ENCODE measurements at regions of chr9 and their contacts with region 1.

Region 1: GRCh38 chr9:130780865-130781504 is 54.1 kb upstream of the ABL1 start:
- DNase-seq: peak in 1 of 2 donors; percentile 86
- ATAC-seq: peak; percentile 75 to 94 (median 90)
- H3K4me3 ChIP-seq: peak overlapping the region in 7 of 10 donors; percentile 16 to 43 (median 29)
- H3K27ac ChIP-seq: peak overlapping the region; percentile 61 to 89 (median 84)
- H3K4me1 ChIP-seq: peaks cover 0 to 61% (median 48%) of the 10 kb centered on the region in 9 donors
- H3K27me3 ChIP-seq: no peaks in the 10 kb centered on the region
- CTCF ChIP-seq: no peak

Region 2: DNA sequence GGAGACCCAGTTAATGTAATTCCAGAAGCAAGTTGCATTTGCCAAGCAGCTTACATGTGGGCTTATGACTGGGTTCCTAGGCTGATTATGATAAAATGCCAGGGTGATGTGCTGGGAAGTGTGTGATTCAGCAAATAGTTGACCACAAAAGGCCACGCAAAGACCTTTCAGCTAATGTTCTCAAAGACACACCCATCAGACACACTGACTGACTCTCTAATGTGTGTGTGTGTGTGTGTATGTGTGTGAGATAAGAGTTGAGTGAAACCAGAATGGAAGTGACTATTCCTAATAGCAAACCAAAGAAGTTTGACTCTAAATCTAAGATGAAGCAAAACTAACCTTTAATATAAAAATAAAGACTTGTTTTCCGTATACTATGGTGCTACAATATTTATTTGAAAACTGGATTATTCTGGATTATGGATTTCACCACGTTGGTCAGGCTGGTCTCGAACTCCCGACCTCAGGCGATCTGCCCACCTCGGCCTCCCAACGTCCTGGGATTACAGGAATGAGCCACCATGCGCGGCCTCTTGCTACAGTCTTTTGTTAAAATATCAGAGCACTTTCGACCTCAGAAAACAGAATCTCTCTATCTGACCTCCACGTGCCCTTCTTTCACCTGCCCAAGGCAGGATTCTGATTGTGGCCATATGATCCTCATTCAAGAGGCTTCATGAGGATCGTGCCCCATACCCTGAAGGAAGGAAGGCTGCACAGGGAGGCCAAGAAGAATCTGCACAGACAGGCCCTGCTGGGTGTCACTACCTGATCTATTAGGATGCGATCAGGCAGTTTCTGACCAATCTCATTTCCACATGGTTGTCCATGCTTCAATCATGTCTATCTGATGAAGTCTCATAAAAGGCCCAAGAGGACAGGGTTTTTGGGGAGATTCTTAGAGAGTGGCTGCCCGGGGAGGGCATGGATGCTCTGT is 870.1 kb before region 1 on chr9:
- intact Hi-C with region 1: no loop called
- DNase-seq: no peak
- ATAC-seq: peak in 1 of 8 donors; percentile 68
- H3K4me3 ChIP-seq: no peak overlapping the region
- H3K27ac ChIP-seq: peak overlapping the region in 1 of 10 donors; percentile 4
- H3K4me1 ChIP-seq: peaks cover 0 to 13% (median 0%) of the 10 kb centered on the region in 9 donors
- H3K27me3 ChIP-seq: no peaks in the 10 kb centered on the region
- CTCF ChIP-seq: no peak

Region 3: GRCh38 chr9:130745210-130745800 is 35.7 kb before region 1 on chr9:
- intact Hi-C with region 1: loop called in 1 of 10 experiments (anchors 5 kb)
- DNase-seq: no peak
- ATAC-seq: no peak
- H3K4me3 ChIP-seq: no peak overlapping the region
- H3K27ac ChIP-seq: no peak overlapping the region
- H3K4me1 ChIP-seq: peaks cover 0 to 18% (median 0%) of the 10 kb centered on the region in 9 donors
- H3K27me3 ChIP-seq: no peaks in the 10 kb centered on the region
- CTCF ChIP-seq: no peak

Region 4: DNA sequence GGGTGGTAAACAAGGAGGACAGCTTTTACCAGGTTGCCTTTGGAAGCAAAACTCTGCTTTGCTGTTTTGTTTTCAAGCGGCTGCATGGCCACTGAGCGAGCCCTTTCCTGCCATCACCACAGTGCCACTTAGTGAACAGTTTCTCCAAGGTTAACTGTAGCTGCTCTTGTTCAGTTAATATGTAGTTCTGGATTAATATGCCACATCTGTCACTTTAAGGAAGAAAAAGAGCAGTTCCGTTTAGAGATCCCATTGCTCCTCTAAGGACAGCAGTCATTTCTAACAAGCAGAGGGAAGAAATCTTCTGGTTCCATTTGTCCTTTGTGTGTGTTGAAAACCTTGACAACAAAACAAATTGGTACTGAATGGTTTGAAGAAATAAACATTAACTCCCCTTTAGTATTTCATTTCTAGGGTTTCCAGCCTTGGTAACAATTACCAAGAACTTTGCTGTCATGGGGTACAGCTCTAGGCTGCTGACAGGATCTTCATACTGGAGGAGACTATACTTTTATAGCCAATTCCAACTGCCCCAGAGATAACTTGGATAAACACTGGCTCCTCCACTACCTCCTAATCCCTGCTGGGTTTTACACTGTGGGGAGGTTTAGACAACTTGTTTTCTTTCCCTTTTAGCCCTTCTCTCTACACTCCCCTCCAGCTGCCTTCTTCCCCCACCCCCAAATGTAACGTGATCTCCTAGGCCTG is 43.8 kb after region 1 on chr9:
- intact Hi-C with region 1: loop called in 2 of 10 experiments (anchors 5 kb)
- DNase-seq: peak in 1 of 2 donors; percentile 53
- ATAC-seq: peak; percentile 65 to 92 (median 90)
- H3K4me3 ChIP-seq: peak overlapping the region in 4 of 10 donors; percentile 4 to 19 (median 10)
- H3K27ac ChIP-seq: peak overlapping the region; percentile 1 to 84 (median 72)
- H3K4me1 ChIP-seq: peaks cover 14 to 43% (median 29%) of the 10 kb centered on the region in 9 donors
- H3K27me3 ChIP-seq: no peaks in the 10 kb centered on the region
- CTCF ChIP-seq: no peak

Region 5: GRCh38 chr9:130834371-130835311 is 53.7 kb after region 1 on chr9 and contains the start of gene ABL1:
- intact Hi-C with region 1: loop called in 6 of 10 experiments (anchors 5 to 10 kb)
- DNase-seq: peak; percentile 78 to 84
- ATAC-seq: peak; percentile 73 to 92 (median 86)
- H3K4me3 ChIP-seq: peak within 1 kb of the TSS; percentile 36 to 78 (median 68)
- H3K27ac ChIP-seq: peak within 1 kb of the TSS; percentile 92 to 96 (median 94)
- H3K4me1 ChIP-seq: peaks cover 10 to 75% (median 66%) of the 10 kb centered on the region in 9 donors
- H3K27me3 ChIP-seq: no peaks in the 10 kb centered on the region
- CTCF ChIP-seq: no peak
- total RNA-seq, gene ABL1: 27.1 to 48.8 (median 34.0) TPM

Region 6: GRCh38 chr9:130847327-130848217 is 66.6 kb after region 1 on chr9:
- intact Hi-C with region 1: loop called in 2 of 10 experiments (anchors 5 kb)
- DNase-seq: peak; percentile 39 to 84
- ATAC-seq: peak; percentile 87 to 90 (median 87)
- H3K4me3 ChIP-seq: peak overlapping the region in 2 of 10 donors; percentile 5 to 31
- H3K27ac ChIP-seq: peak overlapping the region; percentile 51 to 93 (median 86)
- H3K4me1 ChIP-seq: peaks cover 23 to 74% (median 64%) of the 10 kb centered on the region in 9 donors
- H3K27me3 ChIP-seq: no peaks in the 10 kb centered on the region
- CTCF ChIP-seq: peak in 3 of 9 donors; percentile 25 to 50 (median 45)